ENCODE measurements at regions of chr1 and their contacts with region 1.

Region 1: GRCh38 chr1:219847215-219847861 is 81.0 kb downstream of the SLC30A10 start:
- DNase-seq: no peak
- H3K4me3 ChIP-seq: no peak overlapping the region
- H3K27ac ChIP-seq: no peak overlapping the region
- H3K4me1 ChIP-seq: no peaks in the 10 kb centered on the region
- H3K27me3 ChIP-seq: no peaks in the 10 kb centered on the region
- CTCF ChIP-seq: no peak

Region 2: GRCh38 chr1:219279017-219279770 is 568.1 kb before region 1 on chr1:
- CTCF ChIA-PET with region 1: no interaction called
- dilution Hi-C with region 1: no loop called
- in situ Hi-C with region 1: no loop called
- intact Hi-C with region 1: no loop called
- DNase-seq: peak; percentile 8
- H3K4me3 ChIP-seq: no peak overlapping the region
- H3K27ac ChIP-seq: no peak overlapping the region
- H3K4me1 ChIP-seq: no peaks in the 10 kb centered on the region
- H3K27me3 ChIP-seq: no peaks in the 10 kb centered on the region
- CTCF ChIP-seq: no peak

Region 3: GRCh38 chr1:219771080-219771479 is 76.3 kb before region 1 on chr1:
- CTCF ChIA-PET with region 1: no interaction called
- dilution Hi-C with region 1: no loop called
- in situ Hi-C with region 1: no loop called
- intact Hi-C with region 1: no loop called
- DNase-seq: peak; percentile 95
- H3K4me3 ChIP-seq: no peak overlapping the region
- H3K27ac ChIP-seq: no peak overlapping the region
- H3K4me1 ChIP-seq: peaks cover 7% of the 10 kb centered on the region
- H3K27me3 ChIP-seq: no peaks in the 10 kb centered on the region
- CTCF ChIP-seq: no peak

Region 4: GRCh38 chr1:219783605-219784235 is 63.6 kb before region 1 on chr1:
- CTCF ChIA-PET with region 1: no interaction called
- dilution Hi-C with region 1: no loop called
- in situ Hi-C with region 1: no loop called
- intact Hi-C with region 1: no loop called
- DNase-seq: no peak
- H3K4me3 ChIP-seq: no peak overlapping the region
- H3K27ac ChIP-seq: no peak overlapping the region
- H3K4me1 ChIP-seq: no peaks in the 10 kb centered on the region
- H3K27me3 ChIP-seq: no peaks in the 10 kb centered on the region
- CTCF ChIP-seq: no peak

Region 5: DNA sequence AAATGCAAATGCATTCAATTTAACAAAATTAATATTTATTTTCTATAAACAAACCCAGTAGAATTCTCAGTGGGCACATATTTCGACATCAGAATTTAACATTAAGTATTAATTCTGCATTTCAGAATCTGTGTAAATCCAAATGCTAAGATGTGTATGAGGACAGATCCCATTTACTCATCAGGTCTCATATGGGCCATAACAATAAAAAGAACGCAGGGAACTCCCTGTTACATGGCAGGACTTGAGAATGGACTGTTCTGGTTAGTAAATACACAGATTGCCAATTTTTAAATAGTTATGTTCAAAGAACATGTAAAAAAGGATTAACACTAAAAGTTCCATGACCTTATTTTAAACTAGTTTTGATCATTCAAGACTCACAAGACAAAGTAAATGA is 23.0 kb before region 1 on chr1:
- CTCF ChIA-PET with region 1: no interaction called
- dilution Hi-C with region 1: no loop called
- in situ Hi-C with region 1: no loop called
- intact Hi-C with region 1: no loop called
- DNase-seq: no peak
- H3K4me3 ChIP-seq: no peak overlapping the region
- H3K27ac ChIP-seq: no peak overlapping the region
- H3K4me1 ChIP-seq: no peaks in the 10 kb centered on the region
- H3K27me3 ChIP-seq: no peaks in the 10 kb centered on the region
- CTCF ChIP-seq: no peak

Region 6: DNA sequence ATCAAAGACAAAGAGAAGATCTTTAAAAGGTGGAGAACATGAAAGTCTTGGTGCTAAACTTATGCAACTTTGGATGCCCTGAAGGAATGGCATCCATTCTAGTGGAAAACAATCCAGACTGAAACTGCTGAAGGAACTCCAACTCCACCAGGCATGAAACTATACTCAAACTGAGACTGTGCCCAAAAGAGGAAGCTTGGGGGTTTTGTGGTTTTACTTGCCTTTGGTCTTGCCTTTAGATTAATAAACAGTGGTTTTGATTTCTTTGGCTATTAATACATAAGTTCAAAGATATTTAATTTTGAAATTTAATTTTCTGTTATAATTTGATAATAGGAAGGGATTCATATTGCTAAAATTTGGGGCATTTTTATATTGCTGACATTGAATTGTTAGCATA is 98.5 kb after region 1 on chr1:
- CTCF ChIA-PET with region 1: no interaction called
- dilution Hi-C with region 1: loop called (anchors 5 kb)
- in situ Hi-C with region 1: no loop called
- intact Hi-C with region 1: no loop called
- DNase-seq: no peak
- H3K4me3 ChIP-seq: no peak overlapping the region
- H3K27ac ChIP-seq: no peak overlapping the region
- H3K4me1 ChIP-seq: no peaks in the 10 kb centered on the region
- H3K27me3 ChIP-seq: no peaks in the 10 kb centered on the region
- CTCF ChIP-seq: no peak

Measured in mammary epithelial cell (primary cell).